GM10248 (cell line): ENCODE measurements at regions of chr12 and their contacts with region 1.

Region 1: DNA sequence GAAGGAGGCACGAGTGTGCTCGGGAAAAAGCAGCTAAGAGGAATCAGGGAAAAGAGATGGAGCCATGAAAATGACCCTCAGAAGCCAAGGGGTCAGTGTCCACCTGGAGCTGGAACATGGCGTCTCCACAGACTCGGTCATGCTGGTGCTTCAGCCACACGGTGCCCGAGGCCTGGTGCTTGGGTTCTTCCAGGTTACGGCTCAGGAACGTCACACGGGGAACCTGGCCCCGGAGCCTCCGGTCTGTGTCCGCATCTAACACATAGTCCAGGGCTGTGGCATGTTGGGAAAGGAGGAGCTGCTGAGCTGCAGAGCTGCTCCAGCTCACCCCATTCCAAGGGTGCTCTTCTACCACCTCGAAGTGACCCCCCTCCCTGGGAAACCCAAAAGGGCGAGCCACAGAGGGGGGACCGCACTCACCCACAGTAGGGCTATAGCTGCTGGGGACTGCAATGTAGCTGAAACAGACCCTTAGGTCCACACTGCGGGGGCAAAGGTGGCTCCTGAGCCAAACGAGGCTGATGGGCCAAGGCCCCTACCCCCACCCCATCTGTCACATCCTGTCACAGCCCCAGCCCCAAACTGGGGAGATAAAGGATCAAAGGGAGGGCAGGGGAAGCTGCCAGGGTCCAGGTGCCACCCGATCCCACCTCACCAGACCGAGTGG is 10.8 kb downstream of the ITGA7 start:
- DNase-seq: no peak
- CTCF ChIP-seq: no peak

Region 2: DNA sequence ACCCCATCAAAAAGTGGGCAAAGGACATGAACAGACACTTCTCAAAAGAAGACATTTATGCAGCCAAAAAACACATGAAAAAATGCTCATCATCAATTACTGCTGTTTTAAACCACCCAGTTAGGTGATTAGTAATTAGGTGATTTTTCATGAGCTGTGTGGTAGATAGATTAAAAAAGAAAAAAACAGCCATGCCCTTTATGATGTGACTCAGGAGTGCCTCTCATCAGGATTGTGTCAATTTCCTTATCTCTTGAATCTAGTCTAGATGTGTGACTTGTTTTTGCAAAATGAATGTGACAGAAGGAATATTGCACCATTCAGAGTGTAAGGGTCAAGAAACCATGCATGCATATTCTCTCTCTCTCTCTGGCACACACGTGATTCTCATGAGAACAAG is 470.4 kb before region 1 on chr12:
- CTCF ChIA-PET with region 1: no interaction called
- POLR2A ChIA-PET with region 1: no interaction called
- DNase-seq: no peak
- CTCF ChIP-seq: no peak

Region 3: GRCh38 chr12:55707841-55708694 is 11.1 kb after region 1 on chr12 and contains the start of gene ITGA7:
- CTCF ChIA-PET with region 1: interaction called, 17 read pairs
- POLR2A ChIA-PET with region 1: no interaction called
- DNase-seq: peak; percentile 81
- CTCF ChIP-seq: no peak

Region 4: DNA sequence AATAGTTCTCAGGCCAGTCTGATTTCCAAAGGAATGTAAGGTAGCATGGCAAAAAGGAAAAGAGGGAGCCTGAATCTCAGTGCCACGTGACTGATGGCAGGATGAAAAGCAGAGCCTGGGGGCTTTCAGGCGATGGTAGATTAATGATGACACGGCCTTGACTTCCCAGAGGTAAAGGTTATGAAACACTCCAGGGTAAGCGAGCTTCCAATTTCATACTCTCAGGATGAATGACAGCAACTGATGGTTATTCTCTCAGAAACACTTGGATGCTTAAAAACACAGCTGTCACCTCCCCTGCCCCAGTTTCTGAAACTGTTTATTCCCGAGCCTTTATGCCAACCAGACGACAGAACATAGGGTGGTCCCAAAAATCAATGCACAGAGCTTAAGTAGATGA is 74.8 kb after region 1 on chr12:
- CTCF ChIA-PET with region 1: no interaction called
- POLR2A ChIA-PET with region 1: no interaction called
- DNase-seq: no peak
- CTCF ChIP-seq: no peak

Region 5: GRCh38 chr12:55874443-55874842 is 177.5 kb after region 1 on chr12:
- CTCF ChIA-PET with region 1: no interaction called
- POLR2A ChIA-PET with region 1: no interaction called
- DNase-seq: no peak
- CTCF ChIP-seq: no peak